PC-9 (cell line): ENCODE measurements at regions of chr9 and their contacts with region 1.

Region 1: GRCh38 chr9:129374231-129374983 is 196.3 kb upstream of the IER5L start:
- DNase-seq: no peak
- H3K4me3 ChIP-seq: no peak overlapping the region
- H3K27ac ChIP-seq: no peak overlapping the region
- H3K4me1 ChIP-seq: no peaks in the 10 kb centered on the region
- H3K27me3 ChIP-seq: no peaks in the 10 kb centered on the region
- CTCF ChIP-seq: no peak

Region 2: GRCh38 chr9:129270903-129271431 is 103.4 kb before region 1 on chr9:
- CTCF ChIA-PET with region 1: interaction called, 11 read pairs
- POLR2A ChIA-PET with region 1: no interaction called
- intact Hi-C with region 1: no loop called
- DNase-seq: no peak
- H3K4me3 ChIP-seq: no peak overlapping the region
- H3K27ac ChIP-seq: no peak overlapping the region
- H3K4me1 ChIP-seq: peaks cover 18% of the 10 kb centered on the region
- H3K27me3 ChIP-seq: no peaks in the 10 kb centered on the region
- CTCF ChIP-seq: no peak